ENCODE measurements at regions of chr7 and their contacts with region 1.

Region 1: GRCh38 chr7:137898839-137899721 is 52.3 kb upstream of the DGKI start:
- DNase-seq: peak; percentile 75 to 87 (median 87)
- ATAC-seq: peak; percentile 95
- H3K4me3 ChIP-seq: no peak overlapping the region
- H3K4me1 ChIP-seq: peaks cover 3% of the 10 kb centered on the region
- CTCF ChIP-seq: peak; percentile 90

Region 2: DNA sequence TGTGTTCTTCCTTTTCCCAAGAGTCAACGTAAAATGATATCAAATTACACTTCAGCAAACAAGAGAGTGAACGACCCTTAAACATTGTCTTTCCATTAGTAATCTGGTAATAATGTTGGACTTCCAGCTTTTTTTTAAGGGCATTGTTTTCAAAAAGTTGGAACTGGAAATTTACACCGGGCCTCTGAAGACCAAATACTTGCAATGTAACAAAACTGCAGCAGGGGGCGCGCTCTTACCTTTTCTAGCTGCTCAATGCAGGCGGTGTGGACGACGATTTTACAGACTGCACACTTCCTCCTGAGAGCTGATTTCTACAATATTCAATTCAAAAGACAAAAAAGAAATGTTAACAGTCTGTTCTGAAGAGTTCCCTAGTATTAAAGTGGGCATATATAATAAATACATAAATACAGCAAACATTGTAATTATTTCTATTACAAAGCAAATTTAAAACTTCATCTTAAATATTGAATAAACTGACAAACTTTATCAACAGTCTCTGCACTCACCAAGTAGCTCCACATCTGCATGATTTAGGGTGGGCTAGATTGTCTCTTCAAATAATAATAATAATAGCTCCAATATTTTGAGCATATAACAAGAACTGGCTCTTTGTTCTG is 242.7 kb before region 1 on chr7:
- intact Hi-C with region 1: loop called (anchors 5 kb)
- DNase-seq: peak in 2 of 3 donors; percentile 74 to 88
- ATAC-seq: peak; percentile 81
- H3K4me3 ChIP-seq: no peak overlapping the region
- H3K4me1 ChIP-seq: no peaks in the 10 kb centered on the region
- CTCF ChIP-seq: peak; percentile 58

Region 3: DNA sequence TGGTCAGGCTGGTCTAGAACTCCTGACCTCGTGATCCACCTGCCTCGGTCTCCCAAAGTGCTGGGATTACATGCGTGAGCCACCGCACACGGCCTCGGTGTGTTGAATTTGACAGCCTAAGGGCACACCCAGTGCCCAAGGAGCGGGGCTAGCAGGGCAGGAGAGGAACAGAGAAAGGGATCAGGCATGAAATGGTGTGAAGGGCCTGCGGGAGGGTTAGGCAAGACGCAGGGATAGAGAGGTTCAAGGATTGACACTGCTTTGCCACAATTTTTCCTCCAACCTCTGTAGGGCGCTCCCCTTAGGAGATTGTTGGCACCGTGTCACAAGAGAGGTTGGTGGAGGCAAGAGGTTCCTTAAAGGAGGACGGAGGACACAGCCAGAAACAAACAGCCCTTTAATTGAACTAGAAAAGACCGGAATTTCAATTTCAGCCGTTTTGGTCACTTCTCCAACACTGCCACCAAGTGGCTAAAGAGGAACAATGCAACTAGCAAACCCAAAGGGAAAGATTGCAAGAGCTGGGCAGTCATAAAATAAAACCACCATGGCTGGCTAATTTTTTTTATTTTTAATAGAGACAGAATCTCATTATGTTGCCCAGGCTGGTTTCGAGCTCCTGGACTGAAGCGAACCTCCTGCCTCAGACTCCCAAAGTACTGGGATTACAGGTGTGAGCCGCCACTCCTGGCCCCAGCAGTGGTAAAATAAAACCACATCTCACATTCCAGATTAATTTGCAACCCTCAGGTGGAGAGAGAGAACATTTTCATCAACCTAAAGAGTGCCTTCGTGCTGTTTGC is 109.7 kb after region 1 on chr7:
- intact Hi-C with region 1: loop called (anchors 2 to 5 kb)
- DNase-seq: peak in 2 of 3 donors; percentile 27 to 38
- ATAC-seq: peak; percentile 85
- H3K4me3 ChIP-seq: no peak overlapping the region
- H3K4me1 ChIP-seq: no peaks in the 10 kb centered on the region
- CTCF ChIP-seq: peak; percentile 72